Tibial artery (tissue), 4 donors: ENCODE measurements at regions of chr1 and their contacts with region 1.

Region 1: GRCh38 chr1:71049951-71050598 is 2.5 kb upstream of the PTGER3 start:
- DNase-seq: no peak
- H3K4me3 ChIP-seq: no peak overlapping the region
- H3K27ac ChIP-seq: no peak overlapping the region
- H3K4me1 ChIP-seq: peaks cover 0 to 12% (median 1%) of the 10 kb centered on the region in 4 donors
- H3K27me3 ChIP-seq: no peaks in the 10 kb centered on the region
- CTCF ChIP-seq: peak; percentile 78 to 89

Region 2: DNA sequence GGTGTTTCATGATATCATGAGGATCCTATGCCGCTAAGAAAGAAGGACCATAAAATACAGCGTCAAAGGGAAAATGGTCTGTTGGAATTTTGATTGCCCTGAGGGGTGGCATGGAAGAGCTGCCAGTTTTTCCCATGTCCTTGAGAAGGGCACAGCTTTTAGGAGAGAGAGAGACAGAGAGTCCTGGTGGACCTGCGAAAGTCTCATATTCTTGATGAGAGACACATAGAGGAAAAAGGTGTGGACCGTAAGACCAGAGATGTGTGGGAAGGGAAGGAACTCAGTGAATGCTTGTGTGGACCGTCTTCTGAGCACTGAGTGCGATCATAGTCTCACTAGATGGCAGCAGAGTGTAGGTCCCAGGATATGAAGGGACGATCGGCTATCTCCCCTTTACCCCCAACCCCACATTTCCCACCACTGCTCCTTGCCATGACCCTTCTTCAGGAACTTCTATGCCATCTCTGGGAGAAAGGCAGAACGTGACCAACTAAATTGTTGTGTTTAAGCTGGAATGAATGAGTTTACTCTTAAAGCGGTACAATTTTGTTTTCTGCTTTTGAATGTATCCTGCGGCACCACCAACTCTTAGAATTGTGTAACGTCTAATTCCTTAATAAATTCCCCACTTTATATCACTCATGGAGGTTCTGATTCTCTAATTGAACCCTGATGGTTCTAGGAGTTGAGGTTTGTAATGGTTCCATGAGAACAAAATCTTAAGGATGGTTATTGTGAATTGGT is 521.3 kb before region 1 on chr1:
- intact Hi-C with region 1: loop called (anchors 5 kb)
- DNase-seq: no peak
- H3K4me3 ChIP-seq: no peak overlapping the region
- H3K27ac ChIP-seq: no peak overlapping the region
- H3K4me1 ChIP-seq: no peaks in the 10 kb centered on the region
- H3K27me3 ChIP-seq: no peaks in the 10 kb centered on the region
- CTCF ChIP-seq: peak; percentile 32 to 61

Region 3: DNA sequence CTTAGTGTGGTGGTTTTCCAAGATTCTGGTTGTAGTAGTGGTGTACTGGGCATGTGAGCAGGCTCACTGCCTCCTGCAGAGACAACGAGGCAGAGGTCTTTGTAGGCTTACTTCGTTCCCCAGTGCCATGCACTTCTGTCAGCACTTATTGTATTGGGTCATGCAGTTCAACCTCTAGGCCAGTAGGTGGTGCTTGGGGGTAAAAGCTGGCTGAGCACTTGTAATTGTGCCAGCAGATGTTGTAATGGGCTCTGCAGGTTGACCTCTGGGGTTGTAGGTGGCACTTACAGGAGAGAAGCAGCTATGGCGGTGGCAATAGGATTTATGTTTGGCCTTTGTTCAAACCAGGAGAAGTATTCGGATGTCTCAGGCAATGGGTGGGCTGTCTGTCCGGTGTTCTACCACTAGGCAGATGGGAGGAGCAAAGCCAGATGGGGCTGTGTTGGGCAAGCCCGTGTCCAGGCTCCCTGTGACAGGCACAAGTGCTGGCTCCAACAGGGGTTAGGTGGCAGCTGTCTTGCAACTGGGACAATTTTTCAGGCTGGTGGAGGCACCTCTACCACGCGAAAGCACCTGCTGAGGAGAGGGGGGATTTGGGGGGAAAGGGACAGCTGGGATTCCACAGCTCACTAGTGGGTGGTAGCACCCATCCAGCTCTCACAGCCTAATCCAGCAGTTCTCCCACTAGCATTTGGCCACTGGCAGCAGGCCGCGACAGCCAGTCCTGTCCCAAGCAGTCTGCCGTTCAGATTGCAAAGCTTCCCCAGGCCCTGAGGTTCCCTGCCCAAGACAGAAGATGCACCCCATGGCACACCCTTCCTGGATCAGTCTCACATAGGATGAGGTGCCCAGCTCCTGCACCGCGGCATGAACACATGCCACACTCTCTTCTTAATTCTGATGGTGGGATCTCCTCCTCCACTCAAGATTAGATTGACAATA is 364.5 kb before region 1 on chr1:
- intact Hi-C with region 1: loop called (anchors 1 kb)
- DNase-seq: peak; percentile 60 to 82
- H3K4me3 ChIP-seq: no peak overlapping the region
- H3K27ac ChIP-seq: no peak overlapping the region
- H3K4me1 ChIP-seq: no peaks in the 10 kb centered on the region
- H3K27me3 ChIP-seq: no peaks in the 10 kb centered on the region
- CTCF ChIP-seq: peak; percentile 93 to 96

Region 4: GRCh38 chr1:70874111-70874510 is 176.0 kb before region 1 on chr1:
- intact Hi-C with region 1: loop called (anchors 10 kb)
- DNase-seq: peak in 1 of 2 donors; percentile 27
- H3K4me3 ChIP-seq: no peak overlapping the region
- H3K27ac ChIP-seq: peak overlapping the region; percentile 52 to 57
- H3K4me1 ChIP-seq: peaks cover 0 to 47% (median 20%) of the 10 kb centered on the region in 4 donors
- H3K27me3 ChIP-seq: no peaks in the 10 kb centered on the region
- CTCF ChIP-seq: no peak